ENCODE measurements at regions of chr22 and their contacts with region 1.

Region 1: GRCh38 chr22:19122143-19122751 is at the start of gene DGCR2:
- DNase-seq: peak; percentile 87
- H3K4me3 ChIP-seq: peak within 1 kb of the TSS; percentile 84
- H3K27ac ChIP-seq: peak within 1 kb of the TSS; percentile 39
- H3K27me3 ChIP-seq: peaks cover 3% of the 10 kb centered on the region
- CTCF ChIP-seq: no peak
- polyA plus RNA-seq, gene DGCR2: 23.0 and 33.9 TPM in 2 replicates

Region 2: DNA sequence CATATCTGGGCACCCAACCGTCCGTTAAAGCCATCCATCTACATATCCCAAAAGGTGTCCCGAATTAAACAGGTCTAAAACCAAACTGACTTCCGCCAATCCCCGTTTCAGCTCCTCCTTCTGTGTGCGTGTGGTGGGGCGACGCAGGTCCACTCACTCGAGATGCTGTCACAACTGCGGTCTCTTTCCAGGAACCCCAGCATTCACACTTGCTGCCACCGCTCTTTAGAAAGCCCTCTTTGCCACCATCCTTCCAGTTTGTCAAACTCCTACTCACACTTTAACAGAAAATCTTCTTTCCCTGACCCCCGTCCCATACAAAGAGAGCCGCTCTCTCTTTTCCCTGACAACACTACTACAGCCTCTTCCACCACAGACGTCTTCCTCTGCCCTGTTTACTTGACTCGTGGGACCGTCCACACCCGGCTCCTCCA is 21.7 kb after region 1 on chr22:
- CTCF ChIA-PET with region 1: interaction called, 5 read pairs
- POLR2A ChIA-PET with region 1: interaction called, 13 read pairs
- DNase-seq: no peak
- H3K4me3 ChIP-seq: peak overlapping the region; percentile 97
- H3K27ac ChIP-seq: peak overlapping the region; percentile 57
- H3K27me3 ChIP-seq: peaks cover 24% of the 10 kb centered on the region
- CTCF ChIP-seq: no peak

Region 3: DNA sequence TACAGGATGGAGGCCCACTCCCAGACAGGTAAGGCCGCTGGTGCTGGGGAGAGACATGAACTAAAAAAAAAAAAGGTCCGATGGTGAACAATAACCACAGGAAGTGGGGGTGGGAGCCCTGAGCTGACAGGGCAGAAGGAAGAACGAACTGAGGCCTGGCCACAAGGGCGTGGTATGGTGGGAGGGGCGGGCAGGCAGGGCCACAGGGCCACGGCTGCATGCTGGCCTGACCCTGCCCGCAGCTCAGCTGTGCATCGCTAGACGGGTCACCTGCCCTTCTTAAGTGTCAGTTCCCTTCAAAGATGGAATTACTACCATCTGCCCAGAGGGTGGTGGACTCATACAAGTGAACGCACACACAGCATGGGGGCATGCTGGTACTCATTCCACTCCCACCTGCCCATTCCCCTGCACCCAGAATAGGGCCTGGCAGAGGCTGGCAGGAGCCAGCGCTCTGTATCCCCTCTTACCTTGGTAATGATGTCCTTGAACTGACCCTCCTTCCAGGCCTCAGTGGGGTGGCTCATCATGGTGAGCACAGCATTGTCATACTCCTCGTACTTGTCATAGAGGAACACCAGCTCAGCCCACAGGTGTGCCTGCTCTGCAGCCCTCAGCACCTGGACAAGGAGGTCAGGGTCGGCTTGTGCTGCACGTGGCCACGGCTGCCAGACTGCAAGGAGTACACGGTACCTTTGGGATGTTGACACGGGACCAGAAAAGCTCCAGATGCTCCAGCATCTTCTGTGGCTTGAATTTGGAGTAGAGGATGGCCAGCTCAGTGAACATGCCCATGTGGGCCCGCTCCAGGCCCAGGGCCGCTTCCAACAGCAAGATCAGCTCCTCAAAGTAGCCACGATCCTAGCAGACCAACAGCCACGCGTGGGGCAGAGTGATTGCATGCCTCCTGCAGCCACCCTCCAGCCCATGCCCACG is 73.8 kb after region 1 on chr22:
- CTCF ChIA-PET with region 1: no interaction called
- POLR2A ChIA-PET with region 1: no interaction called
- DNase-seq: no peak
- H3K4me3 ChIP-seq: no peak overlapping the region
- H3K27ac ChIP-seq: no peak overlapping the region
- H3K27me3 ChIP-seq: no peaks in the 10 kb centered on the region
- CTCF ChIP-seq: no peak

Measured in AG04450 (cell line).